ENCODE measurements at regions of chrX and their contacts with region 1.

Region 1: DNA sequence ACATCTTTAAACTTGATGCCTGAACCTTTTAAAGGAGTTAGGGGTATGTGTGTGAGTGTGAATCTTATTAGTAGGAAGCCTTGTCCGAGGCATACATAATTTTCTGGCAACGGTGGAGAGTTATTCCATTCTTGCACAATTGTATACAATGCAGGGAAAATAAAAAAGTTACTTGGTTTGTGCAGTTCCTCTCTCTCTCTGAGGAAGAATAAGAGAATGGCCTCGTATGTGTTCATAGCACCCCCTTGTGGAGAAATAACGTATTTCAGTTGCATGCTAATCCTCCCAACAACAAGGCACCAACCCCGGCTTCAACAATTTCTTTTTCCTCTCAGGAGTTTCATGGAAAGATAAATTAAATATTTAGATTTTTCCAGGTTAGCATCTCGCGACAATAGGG is 33.7 kb upstream of the FGF13 start:
- DNase-seq: peak; percentile 6
- CTCF ChIP-seq: peak; percentile 57

Region 2: GRCh38 chrX:137945470-137945869 is 799.7 kb before region 1 on chrX:
- in situ Hi-C with region 1: no loop called
- DNase-seq: no peak
- CTCF ChIP-seq: no peak

Region 3: GRCh38 chrX:138191998-138192397 is 553.2 kb before region 1 on chrX:
- in situ Hi-C with region 1: loop called (anchors 10 kb)
- DNase-seq: peak; percentile 1
- CTCF ChIP-seq: peak; percentile 34

Region 4: GRCh38 chrX:139126493-139126892 is 381.3 kb after region 1 on chrX:
- in situ Hi-C with region 1: no loop called
- DNase-seq: peak; percentile 2
- CTCF ChIP-seq: peak; percentile 15